ENCODE measurements at regions of chr12 and their contacts with region 1.

Region 1: GRCh38 chr12:53190108-53190729 is 9.5 kb upstream of the CSAD start:
- DNase-seq: peak; percentile 83 to 87
- ATAC-seq: peak; percentile 71 to 87 (median 81)
- H3K4me3 ChIP-seq: no peak overlapping the region
- H3K27ac ChIP-seq: no peak overlapping the region
- H3K4me1 ChIP-seq: peaks cover 3% of the 10 kb centered on the region
- H3K27me3 ChIP-seq: no peaks in the 10 kb centered on the region
- CTCF ChIP-seq: peak; percentile 66

Region 2: DNA sequence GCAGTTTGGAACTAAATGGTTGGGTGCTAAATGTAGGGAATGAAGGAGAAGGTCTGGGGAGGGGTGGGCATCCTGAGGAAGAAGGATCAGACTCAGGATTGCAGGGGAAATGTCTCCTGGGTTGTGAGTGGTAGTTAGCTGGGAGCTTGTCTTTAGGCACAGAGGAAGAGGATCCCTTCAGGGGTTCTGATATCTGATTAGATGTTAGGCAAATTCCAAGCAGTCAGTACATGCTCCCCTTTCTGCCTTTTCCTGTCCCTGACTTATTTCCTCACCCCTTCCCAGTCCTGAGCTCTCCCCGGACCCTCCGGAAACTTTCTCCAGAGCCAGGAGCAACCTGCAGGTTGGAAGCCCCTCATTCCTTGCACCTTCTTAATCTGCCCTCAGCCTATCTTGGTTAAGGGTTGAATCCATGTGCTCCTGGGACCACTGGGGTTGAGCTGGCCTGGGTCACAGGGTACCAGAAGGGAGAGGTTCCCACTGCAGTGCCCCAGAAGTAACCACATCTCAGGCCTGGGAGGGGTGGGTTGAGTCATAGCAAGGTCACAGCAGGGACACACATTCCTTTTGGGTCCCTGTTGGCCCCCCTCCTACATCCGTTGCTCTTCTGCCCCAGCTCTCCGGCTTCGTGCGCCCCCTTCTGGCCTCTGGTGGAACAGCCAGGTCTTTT is 91.1 kb before region 1 on chr12:
- intact Hi-C with region 1: loop called in 1 of 2 experiments (anchors 5 kb)
- DNase-seq: peak; percentile 92 to 96
- ATAC-seq: peak; percentile 82 to 86 (median 84)
- H3K4me3 ChIP-seq: peak overlapping the region; percentile 29
- H3K27ac ChIP-seq: peak overlapping the region; percentile 62
- H3K4me1 ChIP-seq: peaks cover 5% of the 10 kb centered on the region
- H3K27me3 ChIP-seq: no peaks in the 10 kb centered on the region
- CTCF ChIP-seq: peak; percentile 97

Region 3: DNA sequence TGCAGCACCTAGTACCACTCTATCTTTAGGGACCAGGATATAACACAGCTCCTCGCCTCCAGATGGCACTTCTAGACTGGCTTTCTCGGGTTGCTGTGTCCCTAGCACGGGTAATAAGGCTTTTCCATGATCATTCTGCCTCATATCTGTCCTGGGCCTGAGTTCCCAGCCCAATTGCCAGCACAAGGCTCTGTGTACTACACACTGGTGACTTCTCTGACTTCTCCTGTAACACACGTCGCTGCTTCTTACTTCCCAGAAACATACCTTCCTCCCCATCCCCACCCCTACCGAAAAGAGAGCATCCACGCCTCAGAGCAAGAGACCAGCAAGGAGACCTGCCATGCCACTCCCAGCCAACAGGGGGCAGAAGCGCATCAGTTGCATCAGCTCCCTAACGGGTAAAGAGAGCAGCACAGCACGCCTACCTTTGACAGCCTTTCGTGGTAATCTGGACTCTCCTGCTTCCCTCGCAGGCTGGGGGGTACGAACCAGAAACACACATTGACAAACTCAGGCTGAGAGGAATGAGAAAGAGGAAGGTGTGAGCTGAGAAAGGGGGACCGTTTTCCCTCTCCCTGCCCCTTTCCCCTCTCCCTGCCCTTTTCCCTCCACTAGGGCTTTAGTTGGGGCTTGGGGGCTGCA is 30.9 kb before region 1 on chr12:
- intact Hi-C with region 1: loop called in 1 of 2 experiments (anchors 5 kb)
- DNase-seq: peak; percentile 85 to 89
- ATAC-seq: peak; percentile 76 to 92 (median 88)
- H3K4me3 ChIP-seq: no peak overlapping the region
- H3K27ac ChIP-seq: no peak overlapping the region
- H3K4me1 ChIP-seq: no peaks in the 10 kb centered on the region
- H3K27me3 ChIP-seq: no peaks in the 10 kb centered on the region
- CTCF ChIP-seq: peak; percentile 92

Measured in psoas muscle (tissue), 8 donors.